MCF 10A (cell line): ENCODE measurements at regions of chr6 and their contacts with region 1.

Region 1: GRCh38 chr6:157873735-157874344 is 50.8 kb downstream of the SNX9 start:
- DNase-seq: peak; percentile 80
- H3K4me3 Mint-ChIP-seq: no peak overlapping the region
- H3K27ac Mint-ChIP-seq: no peak overlapping the region
- H3K4me1 Mint-ChIP-seq: no peaks in the 10 kb centered on the region
- H3K27me3 Mint-ChIP-seq: no peaks in the 10 kb centered on the region
- CTCF ChIP-seq: peak; percentile 75

Region 2: DNA sequence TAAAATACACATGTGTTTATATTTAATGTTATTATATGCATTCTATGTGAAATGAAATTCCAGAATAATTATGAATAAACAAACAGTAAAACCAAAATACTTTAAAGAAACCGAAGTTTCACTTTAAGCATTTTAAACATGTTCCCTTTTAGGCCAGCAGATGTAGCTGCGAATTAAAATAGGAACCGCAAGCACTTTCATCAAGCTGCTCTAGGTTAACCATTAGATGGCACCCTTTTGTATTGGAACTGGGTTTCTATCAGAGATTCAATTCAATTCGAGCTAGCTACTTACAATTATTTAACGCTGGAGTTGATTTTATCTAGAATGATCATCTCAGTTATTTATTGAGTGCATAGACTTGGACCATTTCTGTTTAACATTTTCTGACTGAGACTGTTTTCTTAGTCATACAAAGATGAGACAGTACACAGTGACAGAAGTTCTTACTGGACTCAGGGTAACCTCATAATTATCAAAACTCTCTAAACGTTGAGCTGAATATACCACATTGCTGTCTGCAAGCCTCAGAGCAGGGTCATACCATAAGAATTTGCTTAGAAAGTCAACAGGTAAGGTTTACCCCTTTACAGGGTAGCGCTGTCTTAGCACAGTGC is 559.0 kb before region 1 on chr6:
- CTCF ChIA-PET with region 1: interaction called, 8 read pairs
- POLR2A ChIA-PET with region 1: no interaction called
- intact Hi-C with region 1: loop called (anchors 5 kb)
- DNase-seq: peak; percentile 76
- H3K4me3 Mint-ChIP-seq: no peak overlapping the region
- H3K27ac Mint-ChIP-seq: no peak overlapping the region
- H3K4me1 Mint-ChIP-seq: peaks cover 12% of the 10 kb centered on the region
- H3K27me3 Mint-ChIP-seq: no peaks in the 10 kb centered on the region
- CTCF ChIP-seq: peak; percentile 79

Region 3: GRCh38 chr6:157823528-157824370 is 50.1 kb before region 1 on chr6:
- CTCF ChIA-PET with region 1: interaction called, 4 read pairs
- POLR2A ChIA-PET with region 1: interaction called, 3 read pairs
- intact Hi-C with region 1: loop called (anchors 2 kb)
- DNase-seq: peak; percentile 73
- H3K4me3 Mint-ChIP-seq: peak overlapping the region; percentile 91
- H3K27ac Mint-ChIP-seq: peak overlapping the region; percentile 99
- H3K4me1 Mint-ChIP-seq: peaks cover 6% of the 10 kb centered on the region
- H3K27me3 Mint-ChIP-seq: no peaks in the 10 kb centered on the region
- CTCF ChIP-seq: no peak

Region 4: DNA sequence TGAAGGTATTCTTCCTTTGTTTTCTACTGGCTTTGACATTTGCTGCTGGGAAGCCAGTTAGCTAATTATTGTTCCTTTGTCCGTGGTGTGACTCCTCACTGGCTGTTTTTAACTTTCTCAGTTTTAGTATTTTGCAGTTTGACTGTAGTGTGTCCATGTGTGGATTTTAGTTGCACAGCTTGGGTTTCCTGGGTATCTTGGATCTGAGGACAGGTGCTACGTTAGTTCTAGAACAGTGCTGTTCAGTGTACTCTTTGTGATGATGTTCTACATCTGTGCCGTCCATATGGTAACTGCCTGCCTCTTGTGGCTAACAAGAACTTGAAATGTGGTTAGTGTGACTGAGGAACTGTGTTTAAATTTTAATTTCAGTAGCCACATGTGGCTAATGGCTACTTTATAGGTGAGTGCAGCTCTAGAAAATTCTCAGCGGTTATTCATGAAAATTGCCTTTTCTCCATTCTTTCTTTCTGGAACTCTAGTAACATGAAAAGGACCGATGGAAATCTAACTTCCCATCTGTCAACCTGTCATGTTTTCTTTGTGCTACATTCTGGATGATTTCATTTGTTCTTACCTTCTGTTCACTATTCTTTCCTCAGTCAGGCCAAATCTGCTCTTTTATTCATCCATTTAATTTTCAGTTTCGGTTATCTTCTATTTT is 43.4 kb before region 1 on chr6:
- CTCF ChIA-PET with region 1: interaction called, 13 read pairs
- POLR2A ChIA-PET with region 1: no interaction called
- intact Hi-C with region 1: loop called (anchors 2 kb)
- DNase-seq: no peak
- H3K4me3 Mint-ChIP-seq: no peak overlapping the region
- H3K27ac Mint-ChIP-seq: no peak overlapping the region
- H3K4me1 Mint-ChIP-seq: peaks cover 41% of the 10 kb centered on the region
- H3K27me3 Mint-ChIP-seq: no peaks in the 10 kb centered on the region
- CTCF ChIP-seq: no peak

Region 5: GRCh38 chr6:157841211-157841840 is 32.5 kb before region 1 on chr6:
- CTCF ChIA-PET with region 1: interaction called, 17 read pairs
- POLR2A ChIA-PET with region 1: interaction called, 10 read pairs
- intact Hi-C with region 1: no loop called
- DNase-seq: peak; percentile 76
- H3K4me3 Mint-ChIP-seq: no peak overlapping the region
- H3K27ac Mint-ChIP-seq: peak overlapping the region; percentile 8
- H3K4me1 Mint-ChIP-seq: peaks cover 50% of the 10 kb centered on the region
- H3K27me3 Mint-ChIP-seq: no peaks in the 10 kb centered on the region
- CTCF ChIP-seq: no peak

Region 6: DNA sequence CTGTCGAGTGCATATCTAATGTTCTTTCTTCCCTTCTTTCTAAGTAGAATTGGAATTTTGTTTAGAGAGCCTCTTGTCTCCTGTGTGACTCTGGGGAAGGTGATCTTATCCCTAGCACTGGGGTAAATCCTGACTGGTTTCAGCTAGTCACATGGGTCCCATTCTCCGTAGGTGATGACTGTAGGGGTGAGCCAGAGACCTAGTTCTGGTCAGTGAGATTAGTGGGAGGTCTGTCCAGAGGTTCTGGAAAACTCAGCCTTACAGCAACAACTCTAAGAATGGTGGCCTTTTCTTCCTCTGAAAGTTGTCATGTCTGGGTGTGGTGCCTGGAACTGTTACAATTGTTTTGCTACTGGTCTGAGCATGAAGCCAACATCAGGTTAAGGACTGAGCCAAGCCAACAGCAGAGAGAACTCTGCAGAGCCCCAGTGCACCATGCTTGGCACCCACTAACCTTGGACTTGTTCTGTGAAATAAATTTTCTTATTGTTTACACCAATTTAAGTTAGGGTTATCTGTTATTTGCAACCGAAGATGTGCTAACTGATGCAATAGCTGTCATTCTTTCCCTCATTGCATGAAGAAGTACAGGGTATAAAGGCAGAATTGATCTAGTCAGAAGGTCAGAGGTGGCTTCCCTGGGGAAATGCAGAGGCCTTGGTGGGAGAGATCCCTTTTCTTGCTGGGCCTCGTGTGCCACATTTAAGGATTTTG is 381.6 kb after region 1 on chr6:
- CTCF ChIA-PET with region 1: no interaction called
- POLR2A ChIA-PET with region 1: no interaction called
- intact Hi-C with region 1: no loop called
- DNase-seq: no peak
- H3K4me3 Mint-ChIP-seq: no peak overlapping the region
- H3K27ac Mint-ChIP-seq: no peak overlapping the region
- H3K4me1 Mint-ChIP-seq: peaks cover 15% of the 10 kb centered on the region
- H3K27me3 Mint-ChIP-seq: no peaks in the 10 kb centered on the region
- CTCF ChIP-seq: no peak

Region 7: DNA sequence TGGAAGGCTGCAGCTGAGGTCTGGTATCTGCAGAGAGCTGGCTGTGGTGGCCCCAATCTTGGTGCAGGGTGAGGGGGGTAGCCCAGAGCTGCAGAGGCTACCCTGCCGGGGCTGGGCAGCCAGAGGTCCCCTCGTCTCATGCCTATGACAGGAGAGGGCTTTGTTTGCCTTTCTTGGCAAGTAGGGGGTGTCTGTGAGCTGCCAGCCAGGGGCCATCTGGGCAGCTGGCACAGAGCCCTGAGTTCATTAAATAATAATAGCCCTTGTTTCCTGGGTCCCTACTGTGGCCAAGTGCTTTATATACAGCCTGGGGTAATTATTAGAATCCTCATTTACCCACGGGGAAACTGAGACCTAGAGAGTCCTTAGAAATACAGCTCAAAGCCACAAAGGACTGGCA is 878.8 kb after region 1 on chr6:
- CTCF ChIA-PET with region 1: no interaction called
- POLR2A ChIA-PET with region 1: no interaction called
- intact Hi-C with region 1: no loop called
- DNase-seq: no peak
- H3K4me3 Mint-ChIP-seq: no peak overlapping the region
- H3K27ac Mint-ChIP-seq: no peak overlapping the region
- H3K4me1 Mint-ChIP-seq: no peaks in the 10 kb centered on the region
- H3K27me3 Mint-ChIP-seq: no peaks in the 10 kb centered on the region
- CTCF ChIP-seq: no peak